CD8-positive, alpha-beta T cell (primary cell): ENCODE measurements at regions of chr19 and their contacts with region 1.

Region 1: GRCh38 chr19:13117772-13118423 is at the start of gene NACC1:
- DNase-seq: peak; percentile 81 to 93 (median 87)
- ATAC-seq: peak; percentile 82
- H3K4me3 ChIP-seq: peak within 1 kb of the TSS; percentile 65 to 78
- H3K4me3 Mint-ChIP-seq: peak within 1 kb of the TSS; percentile 98
- H3K27ac ChIP-seq: peak within 1 kb of the TSS; percentile 41 to 61
- H3K27ac Mint-ChIP-seq: peak within 1 kb of the TSS; percentile 96
- H3K4me1 ChIP-seq: peaks cover 35% of the 10 kb centered on the region
- H3K4me1 Mint-ChIP-seq: peaks cover 60% of the 10 kb centered on the region
- H3K27me3 ChIP-seq: no peaks in the 10 kb centered on the region
- H3K27me3 Mint-ChIP-seq: no peaks in the 10 kb centered on the region
- CTCF ChIP-seq: no peak
- total RNA-seq, gene NACC1: 16.8 to 20.8 TPM

Region 2: DNA sequence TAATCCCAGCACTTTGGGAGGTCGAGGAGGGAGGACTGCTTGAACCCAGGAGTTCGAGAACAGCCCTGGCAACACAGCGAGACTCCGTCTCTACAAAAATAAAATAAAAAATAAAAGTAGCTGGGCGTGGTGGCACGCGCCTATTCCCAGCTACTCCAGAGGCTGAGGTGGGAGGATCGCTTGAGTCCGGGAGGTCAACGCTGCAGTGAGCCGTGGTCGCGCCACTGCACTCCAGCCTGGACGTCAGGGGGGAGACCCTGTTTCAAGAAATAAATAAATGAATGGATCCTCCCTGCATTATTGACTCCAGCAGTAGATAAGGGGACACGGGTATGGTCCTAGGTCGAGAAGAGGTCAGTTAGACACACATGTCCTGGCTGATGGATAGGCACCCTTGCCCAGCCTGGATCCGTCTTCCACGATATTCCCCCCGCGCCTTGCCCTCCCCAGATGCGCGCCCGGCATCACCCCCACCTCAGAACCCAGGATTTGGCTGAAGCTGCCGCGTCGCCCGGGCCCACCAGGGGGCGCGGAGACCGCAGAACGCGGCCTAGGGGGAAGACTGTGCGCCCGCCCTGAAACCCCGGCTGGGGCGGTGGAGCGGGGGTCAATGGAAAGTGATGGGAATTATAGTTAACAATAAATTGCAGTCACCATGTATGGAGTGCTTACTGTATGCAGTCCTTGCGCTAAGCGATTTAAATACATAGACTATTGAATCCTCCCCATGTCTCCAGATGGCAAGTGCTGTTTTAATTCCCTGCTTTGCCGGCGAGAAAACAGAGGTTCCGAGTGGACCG is 340.5 kb before region 1 on chr19:
- CTCF ChIA-PET with region 1: no interaction called
- POLR2A ChIA-PET with region 1: no interaction called
- intact Hi-C with region 1: loop called in 1 of 2 experiments (anchors 5 kb)
- DNase-seq: peak; percentile 68 to 89 (median 80)
- ATAC-seq: peak; percentile 4
- H3K4me3 ChIP-seq: peak overlapping the region; percentile 63 to 86
- H3K4me3 Mint-ChIP-seq: peak overlapping the region; percentile 82
- H3K27ac ChIP-seq: peak overlapping the region; percentile 57 to 87
- H3K27ac Mint-ChIP-seq: peak overlapping the region; percentile 85
- H3K4me1 ChIP-seq: peaks cover 38% of the 10 kb centered on the region
- H3K4me1 Mint-ChIP-seq: peaks cover 36% of the 10 kb centered on the region
- H3K27me3 ChIP-seq: no peaks in the 10 kb centered on the region
- H3K27me3 Mint-ChIP-seq: no peaks in the 10 kb centered on the region
- CTCF ChIP-seq: peak; percentile 97

Region 3: DNA sequence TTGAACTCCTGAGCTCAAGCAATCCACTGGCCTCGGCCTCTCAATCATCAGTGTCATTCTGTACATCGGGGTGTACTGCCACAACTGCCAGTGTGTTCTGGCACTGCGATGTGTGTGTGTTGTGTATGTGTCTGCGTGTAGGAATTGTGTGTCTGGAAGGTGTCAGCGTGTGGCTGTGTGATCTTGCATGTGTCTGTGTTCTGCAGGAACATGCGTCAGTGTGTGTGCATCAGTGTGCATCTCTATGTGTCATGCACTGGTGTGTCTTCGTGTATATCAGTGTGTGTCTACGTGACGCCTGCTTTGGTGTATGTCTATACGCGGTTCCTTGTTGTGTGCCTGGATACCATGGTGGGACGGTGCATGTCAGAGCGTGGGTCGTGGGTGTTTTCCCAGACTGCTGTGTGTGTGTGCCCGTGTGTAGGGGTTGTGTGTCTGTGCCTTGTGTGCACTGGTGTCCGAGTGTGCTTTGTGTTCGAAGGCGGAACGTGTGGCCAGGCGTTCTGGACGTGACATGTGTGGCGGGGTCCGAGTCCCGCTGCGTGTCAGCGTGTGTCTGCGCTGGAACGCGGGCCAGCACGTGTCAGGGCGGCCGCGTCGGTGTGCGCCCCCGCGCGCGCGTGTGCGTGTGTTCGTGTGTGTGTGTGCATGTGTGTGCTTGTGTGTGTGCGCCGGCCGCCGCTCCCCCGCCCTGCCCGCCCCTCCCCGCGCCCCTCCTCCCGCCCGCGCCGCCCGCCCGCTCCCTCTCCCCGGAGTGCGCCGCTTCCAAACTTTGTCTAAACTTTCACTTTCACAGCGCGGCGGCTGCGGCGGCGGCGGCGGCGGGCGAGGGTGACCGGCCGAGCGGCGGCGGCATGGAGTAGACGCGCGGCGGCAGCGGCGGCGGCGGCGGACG is 123.0 kb before region 1 on chr19 and contains the start of gene NFIX:
- CTCF ChIA-PET with region 1: no interaction called
- POLR2A ChIA-PET with region 1: no interaction called
- intact Hi-C with region 1: no loop called
- DNase-seq: peak in 7 of 9 experiments; percentile 27 to 72 (median 62)
- ATAC-seq: peak; percentile 76
- H3K4me3 ChIP-seq: peak within 1 kb of the TSS; percentile 47 to 61
- H3K4me3 Mint-ChIP-seq: peak within 1 kb of the TSS; percentile 94
- H3K27ac ChIP-seq: no peak within 1 kb of the TSS
- H3K27ac Mint-ChIP-seq: peak within 1 kb of the TSS; percentile 75
- H3K4me1 ChIP-seq: peaks cover 7% of the 10 kb centered on the region
- H3K4me1 Mint-ChIP-seq: peaks cover 8% of the 10 kb centered on the region
- H3K27me3 ChIP-seq: peaks cover 0 to 8% of the 10 kb centered on the region in 2 experiments
- H3K27me3 Mint-ChIP-seq: peaks cover 4% of the 10 kb centered on the region
- CTCF ChIP-seq: no peak
- total RNA-seq, gene NFIX: 2.5 to 5.0 TPM

Region 4: GRCh38 chr19:13099073-13099999 is 18.6 kb before region 1 on chr19:
- CTCF ChIA-PET with region 1: interaction called, 10 read pairs
- POLR2A ChIA-PET with region 1: interaction called, 18 read pairs
- intact Hi-C with region 1: loop called (anchors 1 to 2 kb)
- DNase-seq: peak; percentile 61 to 93 (median 81)
- ATAC-seq: peak; percentile 66
- H3K4me3 ChIP-seq: peak overlapping the region; percentile 35 to 54
- H3K4me3 Mint-ChIP-seq: peak overlapping the region; percentile 73
- H3K27ac ChIP-seq: peak overlapping the region; percentile 65 to 87
- H3K27ac Mint-ChIP-seq: peak overlapping the region; percentile 96
- H3K4me1 ChIP-seq: peaks cover 82% of the 10 kb centered on the region
- H3K4me1 Mint-ChIP-seq: peaks cover 51% of the 10 kb centered on the region
- H3K27me3 ChIP-seq: peaks cover 16 to 33% of the 10 kb centered on the region in 2 experiments
- H3K27me3 Mint-ChIP-seq: peaks cover 24% of the 10 kb centered on the region
- CTCF ChIP-seq: no peak

Region 5: DNA sequence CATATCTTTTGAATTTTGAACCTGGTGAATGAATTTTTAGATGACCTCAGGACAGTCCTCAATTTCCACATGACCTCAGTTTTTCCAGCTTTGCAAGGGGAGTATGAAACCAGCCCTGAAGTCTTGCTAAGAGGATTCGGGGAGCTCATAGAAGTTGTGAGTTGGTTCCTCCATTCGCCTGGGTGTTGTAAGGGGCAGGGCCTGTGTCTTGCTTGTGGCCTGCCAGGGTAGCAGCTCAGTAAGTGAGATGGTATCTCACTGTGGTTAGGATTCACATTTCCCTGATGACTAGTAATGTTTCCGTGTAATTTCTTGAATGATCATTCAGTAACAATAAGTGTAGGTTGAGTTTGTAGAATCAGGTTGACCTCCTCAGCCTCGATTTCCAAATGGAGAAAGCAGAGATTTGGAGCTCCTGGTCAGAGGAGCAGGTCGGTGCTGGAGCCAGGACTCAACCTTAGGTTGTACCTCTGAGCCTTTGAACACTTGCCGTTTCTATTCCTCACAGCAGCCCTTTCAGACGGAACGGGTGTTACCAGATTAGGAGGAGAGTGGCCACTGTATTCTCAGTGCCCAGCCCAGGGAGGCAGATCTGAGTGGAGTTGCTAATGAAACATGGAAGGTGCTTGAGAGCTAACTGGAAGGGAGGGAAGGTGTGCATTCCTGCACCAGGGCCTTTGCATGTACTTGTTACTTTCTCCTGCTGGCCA is 14.7 kb after region 1 on chr19:
- CTCF ChIA-PET with region 1: no interaction called
- POLR2A ChIA-PET with region 1: interaction called, 4 read pairs
- intact Hi-C with region 1: loop called in 1 of 2 experiments (anchors 2 kb)
- DNase-seq: peak in 5 of 9 experiments; percentile 36 to 65 (median 57)
- ATAC-seq: peak; percentile 92
- H3K4me3 ChIP-seq: no peak overlapping the region
- H3K4me3 Mint-ChIP-seq: no peak overlapping the region
- H3K27ac ChIP-seq: no peak overlapping the region
- H3K27ac Mint-ChIP-seq: peak overlapping the region; percentile 33
- H3K4me1 ChIP-seq: peaks cover 8% of the 10 kb centered on the region
- H3K4me1 Mint-ChIP-seq: peaks cover 32% of the 10 kb centered on the region
- H3K27me3 ChIP-seq: no peaks in the 10 kb centered on the region
- H3K27me3 Mint-ChIP-seq: no peaks in the 10 kb centered on the region
- CTCF ChIP-seq: no peak

Region 6: GRCh38 chr19:13234518-13234917 is 116.6 kb after region 1 on chr19:
- CTCF ChIA-PET with region 1: interaction called, 4 read pairs
- POLR2A ChIA-PET with region 1: no interaction called
- intact Hi-C with region 1: loop called in 1 of 2 experiments (anchors 1 kb)
- DNase-seq: peak; percentile 23 to 82 (median 63)
- ATAC-seq: peak; percentile 99
- H3K4me3 ChIP-seq: no peak overlapping the region
- H3K4me3 Mint-ChIP-seq: peak overlapping the region; percentile 65
- H3K27ac ChIP-seq: no peak overlapping the region
- H3K27ac Mint-ChIP-seq: no peak overlapping the region
- H3K4me1 ChIP-seq: peaks cover 13% of the 10 kb centered on the region
- H3K4me1 Mint-ChIP-seq: peaks cover 14% of the 10 kb centered on the region
- H3K27me3 ChIP-seq: no peaks in the 10 kb centered on the region
- H3K27me3 Mint-ChIP-seq: no peaks in the 10 kb centered on the region
- CTCF ChIP-seq: peak; percentile 91